ENCODE measurements at regions of chr16 and their contacts with region 1.

Region 1: GRCh38 chr16:84504420-84505248 is at the start of gene MEAK7:
- DNase-seq: peak; percentile 95 to 98 (median 97)
- ATAC-seq: peak; percentile 94
- H3K4me3 ChIP-seq: peak within 1 kb of the TSS; percentile 74 to 83
- H3K4me3 Mint-ChIP-seq: peak within 1 kb of the TSS; percentile 90
- H3K27ac ChIP-seq: peak within 1 kb of the TSS; percentile 43
- H3K27ac Mint-ChIP-seq: peak within 1 kb of the TSS; percentile 84
- H3K4me1 ChIP-seq: peaks cover 56% of the 10 kb centered on the region
- H3K4me1 Mint-ChIP-seq: peaks cover 57% of the 10 kb centered on the region
- H3K27me3 ChIP-seq: peaks cover 0 to 2% of the 10 kb centered on the region in 2 experiments
- H3K27me3 Mint-ChIP-seq: no peaks in the 10 kb centered on the region
- CTCF ChIP-seq: no peak
- total RNA-seq, gene MEAK7: 2.1 to 2.2 TPM

Region 2: GRCh38 chr16:83807710-83808572 is 696.7 kb before region 1 on chr16 and contains the start of gene HSBP1:
- CTCF ChIA-PET with region 1: no interaction called
- POLR2A ChIA-PET with region 1: no interaction called
- intact Hi-C with region 1: loop called in 1 of 2 experiments (anchors 10 kb)
- DNase-seq: peak; percentile 83 to 95 (median 92)
- ATAC-seq: peak; percentile 98
- H3K4me3 ChIP-seq: peak within 1 kb of the TSS; percentile 82 to 91
- H3K4me3 Mint-ChIP-seq: peak within 1 kb of the TSS; percentile 98
- H3K27ac ChIP-seq: peak within 1 kb of the TSS; percentile 70 to 85
- H3K27ac Mint-ChIP-seq: peak within 1 kb of the TSS; percentile 96
- H3K4me1 ChIP-seq: peaks cover 10% of the 10 kb centered on the region
- H3K4me1 Mint-ChIP-seq: peaks cover 36% of the 10 kb centered on the region
- H3K27me3 ChIP-seq: no peaks in the 10 kb centered on the region
- H3K27me3 Mint-ChIP-seq: no peaks in the 10 kb centered on the region
- CTCF ChIP-seq: no peak
- total RNA-seq, gene HSBP1: 17.5 to 24.1 TPM

Region 3: DNA sequence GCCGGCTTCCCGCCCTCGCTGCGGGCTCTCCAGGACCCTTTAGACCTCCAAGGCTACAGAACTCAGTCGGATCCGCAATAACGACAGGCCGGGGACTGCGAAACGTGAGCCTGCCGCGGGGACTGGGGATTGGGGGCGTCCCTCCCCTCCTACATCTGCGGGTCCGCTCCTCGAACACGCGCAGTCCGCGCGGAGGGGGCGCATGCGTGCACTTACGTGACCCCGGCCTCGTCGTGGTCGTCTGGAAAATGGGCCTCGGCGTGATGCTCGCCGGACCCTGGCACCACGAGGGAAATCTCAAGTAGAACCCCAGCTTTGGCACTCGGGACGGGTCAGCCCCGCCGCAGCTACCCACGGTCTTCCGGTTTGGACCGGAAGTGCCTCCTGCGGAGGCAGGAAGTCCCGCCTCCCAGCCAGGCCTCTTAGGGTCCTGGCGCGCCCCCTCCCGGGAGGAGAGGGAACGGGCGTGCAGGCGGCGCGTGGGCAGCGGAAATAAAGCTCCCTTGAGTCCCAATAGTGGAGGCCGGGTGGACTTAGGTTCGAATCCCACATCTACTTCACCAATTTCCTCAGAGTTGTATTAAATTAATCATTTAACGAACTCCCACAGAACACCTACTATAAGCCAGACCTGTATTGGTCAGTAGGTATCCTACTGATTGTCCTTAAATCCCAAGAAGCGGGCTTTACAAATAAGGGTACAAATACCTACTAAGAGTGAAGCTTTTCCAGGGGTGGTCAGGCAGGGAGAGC is 317.8 kb before region 1 on chr16 and contains the start of gene TAF1C:
- CTCF ChIA-PET with region 1: interaction called, 3 read pairs
- POLR2A ChIA-PET with region 1: no interaction called
- intact Hi-C with region 1: loop called in 1 of 2 experiments (anchors 10 kb)
- DNase-seq: peak; percentile 75 to 95 (median 88)
- ATAC-seq: peak; percentile 97
- H3K4me3 ChIP-seq: peak within 1 kb of the TSS; percentile 87 to 100
- H3K4me3 Mint-ChIP-seq: peak within 1 kb of the TSS; percentile 91
- H3K27ac ChIP-seq: peak within 1 kb of the TSS; percentile 71 to 77
- H3K27ac Mint-ChIP-seq: peak within 1 kb of the TSS; percentile 94
- H3K4me1 ChIP-seq: peaks cover 6% of the 10 kb centered on the region
- H3K4me1 Mint-ChIP-seq: peaks cover 20% of the 10 kb centered on the region
- H3K27me3 ChIP-seq: no peaks in the 10 kb centered on the region
- H3K27me3 Mint-ChIP-seq: no peaks in the 10 kb centered on the region
- CTCF ChIP-seq: peak; percentile 89
- total RNA-seq, gene TAF1C: 86.0 to 92.6 TPM

Region 4: DNA sequence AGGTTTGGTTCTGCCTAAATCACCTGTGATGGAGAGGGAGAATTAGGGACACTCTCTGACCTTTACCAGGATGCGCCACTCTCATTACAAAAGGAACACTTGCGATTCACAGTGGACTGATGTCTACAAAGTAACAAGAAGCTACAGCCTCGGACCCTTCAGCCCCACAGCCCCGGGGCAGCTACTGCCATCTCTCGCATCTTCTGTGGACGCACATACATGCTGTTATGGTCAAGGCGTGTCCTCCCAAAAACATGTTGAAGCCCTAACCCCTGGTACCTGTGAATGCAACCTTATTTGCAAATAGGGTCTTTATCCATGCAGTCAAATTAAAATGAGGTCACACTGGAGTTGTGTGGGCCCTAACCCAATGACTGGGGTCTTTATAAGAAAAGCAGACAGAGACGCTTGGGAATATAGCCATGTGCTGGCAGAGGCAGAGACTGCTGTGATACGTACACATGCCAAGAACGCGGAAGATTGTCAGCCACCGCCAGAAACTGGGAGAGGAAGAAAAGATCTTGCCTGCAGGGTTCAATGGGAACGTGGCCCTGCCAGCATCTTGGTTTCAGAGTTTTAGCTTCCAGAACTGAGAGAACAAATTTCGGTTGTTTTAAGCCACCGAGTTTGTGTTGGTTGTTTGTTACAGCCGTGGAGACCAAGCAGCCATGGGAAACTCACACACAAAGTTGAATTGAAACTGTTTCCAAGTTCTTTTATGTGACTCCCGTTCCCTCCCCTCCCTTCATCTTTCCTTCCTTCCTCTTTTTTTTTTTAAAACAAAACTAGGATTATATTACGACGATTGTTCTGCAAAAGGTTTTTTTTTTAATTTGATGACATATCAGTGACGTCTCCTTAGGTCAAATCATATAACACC is 113.2 kb before region 1 on chr16:
- CTCF ChIA-PET with region 1: no interaction called
- POLR2A ChIA-PET with region 1: no interaction called
- intact Hi-C with region 1: no loop called
- DNase-seq: no peak
- ATAC-seq: no peak
- H3K4me3 ChIP-seq: no peak overlapping the region
- H3K4me3 Mint-ChIP-seq: no peak overlapping the region
- H3K27ac ChIP-seq: no peak overlapping the region
- H3K27ac Mint-ChIP-seq: no peak overlapping the region
- H3K4me1 ChIP-seq: no peaks in the 10 kb centered on the region
- H3K4me1 Mint-ChIP-seq: no peaks in the 10 kb centered on the region
- H3K27me3 ChIP-seq: peaks cover 0 to under 1% of the 10 kb centered on the region in 2 experiments
- H3K27me3 Mint-ChIP-seq: peaks cover 19% of the 10 kb centered on the region
- CTCF ChIP-seq: no peak

Region 5: DNA sequence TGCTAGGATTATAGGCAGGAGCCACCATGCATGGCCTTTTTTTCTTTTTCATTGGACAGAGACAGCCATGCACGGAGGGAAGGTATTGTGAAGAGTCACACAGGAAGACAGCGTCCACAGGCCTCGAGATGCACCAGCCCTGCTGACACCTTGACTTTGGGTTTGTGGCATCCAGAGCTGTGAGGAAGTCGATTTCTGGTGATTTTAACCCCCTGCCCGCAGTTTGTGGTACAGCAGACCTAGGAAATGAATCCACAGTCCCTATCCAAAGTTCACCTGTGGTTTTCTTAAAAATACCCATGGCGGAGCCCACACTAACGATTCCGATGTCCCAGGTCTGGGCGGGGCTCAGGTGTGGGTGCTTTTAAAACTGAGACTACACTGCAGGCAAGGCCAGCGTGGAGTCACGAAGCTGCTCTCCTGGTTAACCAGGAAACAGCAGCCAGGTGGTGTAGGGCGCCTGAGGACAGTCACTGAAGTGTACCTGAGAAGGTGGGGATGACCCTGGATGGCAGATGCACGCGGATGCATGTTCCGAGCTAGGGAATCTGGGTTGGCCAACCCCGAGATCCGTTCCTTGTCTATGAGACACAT is 14.2 kb after region 1 on chr16:
- CTCF ChIA-PET with region 1: interaction called, 32 read pairs
- POLR2A ChIA-PET with region 1: interaction called, 20 read pairs
- intact Hi-C with region 1: loop called in 1 of 2 experiments (anchors 1 kb)
- DNase-seq: peak; percentile 29 to 90 (median 66)
- ATAC-seq: peak; percentile 54
- H3K4me3 ChIP-seq: no peak overlapping the region
- H3K4me3 Mint-ChIP-seq: peak overlapping the region; percentile 45
- H3K27ac ChIP-seq: peak overlapping the region in 1 of 2 experiments; percentile 21
- H3K27ac Mint-ChIP-seq: peak overlapping the region; percentile 84
- H3K4me1 ChIP-seq: peaks cover 61% of the 10 kb centered on the region
- H3K4me1 Mint-ChIP-seq: peaks cover 61% of the 10 kb centered on the region
- H3K27me3 ChIP-seq: no peaks in the 10 kb centered on the region
- H3K27me3 Mint-ChIP-seq: no peaks in the 10 kb centered on the region
- CTCF ChIP-seq: no peak

Region 6: GRCh38 chr16:84541999-84542817 is 37.6 kb after region 1 on chr16:
- CTCF ChIA-PET with region 1: no interaction called
- POLR2A ChIA-PET with region 1: no interaction called
- intact Hi-C with region 1: no loop called
- DNase-seq: no peak
- ATAC-seq: no peak
- H3K4me3 ChIP-seq: no peak overlapping the region
- H3K4me3 Mint-ChIP-seq: no peak overlapping the region
- H3K27ac ChIP-seq: no peak overlapping the region
- H3K27ac Mint-ChIP-seq: no peak overlapping the region
- H3K4me1 ChIP-seq: peaks cover 14% of the 10 kb centered on the region
- H3K4me1 Mint-ChIP-seq: peaks cover 25% of the 10 kb centered on the region
- H3K27me3 ChIP-seq: no peaks in the 10 kb centered on the region
- H3K27me3 Mint-ChIP-seq: no peaks in the 10 kb centered on the region
- CTCF ChIP-seq: no peak

Region 7: GRCh38 chr16:84726079-84726668 is 221.5 kb after region 1 on chr16:
- CTCF ChIA-PET with region 1: interaction called, 50 read pairs
- POLR2A ChIA-PET with region 1: no interaction called
- intact Hi-C with region 1: no loop called
- DNase-seq: peak; percentile 74 to 92 (median 83)
- ATAC-seq: peak; percentile 76
- H3K4me3 ChIP-seq: no peak overlapping the region
- H3K4me3 Mint-ChIP-seq: peak overlapping the region; percentile 50
- H3K27ac ChIP-seq: no peak overlapping the region
- H3K27ac Mint-ChIP-seq: no peak overlapping the region
- H3K4me1 ChIP-seq: peaks cover 34% of the 10 kb centered on the region
- H3K4me1 Mint-ChIP-seq: peaks cover 64% of the 10 kb centered on the region
- H3K27me3 ChIP-seq: no peaks in the 10 kb centered on the region
- H3K27me3 Mint-ChIP-seq: no peaks in the 10 kb centered on the region
- CTCF ChIP-seq: peak; percentile 98

Region 8: DNA sequence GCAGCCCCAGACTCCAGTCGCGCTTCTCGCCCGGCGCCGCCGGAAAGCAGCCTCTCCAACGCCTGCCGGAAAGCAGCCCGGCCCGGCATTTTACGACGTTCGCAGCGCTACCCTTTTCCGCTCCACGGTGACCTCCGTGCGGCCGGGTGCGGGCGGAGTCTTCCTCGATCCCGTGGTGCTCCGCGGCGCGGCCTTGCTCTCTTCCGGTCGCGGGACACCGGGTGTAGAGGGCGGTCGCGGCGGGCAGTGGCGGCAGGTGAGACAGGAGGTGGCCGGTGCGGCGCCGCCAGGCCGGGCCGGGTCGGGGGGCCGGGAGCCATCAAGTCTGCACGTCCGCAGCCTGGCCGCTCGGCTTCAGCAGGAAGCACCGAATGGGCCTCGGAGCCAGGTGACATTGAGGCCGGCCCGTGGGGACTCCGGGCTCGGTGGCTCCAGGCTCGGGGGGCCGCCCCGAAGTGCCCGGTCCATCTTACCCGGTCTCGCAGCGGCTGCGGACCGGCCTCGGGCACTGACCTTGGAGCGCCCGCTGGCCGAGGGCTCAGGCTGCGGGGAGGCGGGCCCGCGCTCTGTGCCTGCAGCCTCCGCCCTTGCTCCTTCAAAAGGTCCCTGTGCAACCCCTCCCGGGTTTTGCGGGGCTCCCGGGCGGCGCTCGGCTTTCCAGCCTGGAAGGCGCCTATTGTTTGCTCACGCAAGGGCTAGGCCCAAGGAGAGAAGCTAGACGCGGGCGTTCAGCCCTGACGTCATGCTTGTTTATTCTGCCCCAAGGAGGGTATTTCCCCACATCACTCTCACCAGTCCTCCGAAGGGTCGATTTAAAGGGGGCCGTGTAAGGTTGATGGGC is 1295.1 kb after region 1 on chr16 and contains the starts of genes COX4I1 and EMC8:
- CTCF ChIA-PET with region 1: no interaction called
- POLR2A ChIA-PET with region 1: no interaction called
- intact Hi-C with region 1: loop called in 1 of 2 experiments (anchors 10 kb)
- DNase-seq: peak; percentile 84 to 96 (median 93)
- ATAC-seq: peak; percentile 76
- H3K4me3 ChIP-seq: peak within 1 kb of the TSS; percentile 83 to 87
- H3K4me3 Mint-ChIP-seq: peak within 1 kb of the TSS; percentile 89
- H3K27ac ChIP-seq: peak within 1 kb of the TSS; percentile 77 to 92
- H3K27ac Mint-ChIP-seq: peak within 1 kb of the TSS; percentile 97
- H3K4me1 ChIP-seq: peaks cover 33% of the 10 kb centered on the region
- H3K4me1 Mint-ChIP-seq: peaks cover 69% of the 10 kb centered on the region
- H3K27me3 ChIP-seq: no peaks in the 10 kb centered on the region
- H3K27me3 Mint-ChIP-seq: no peaks in the 10 kb centered on the region
- CTCF ChIP-seq: no peak
- total RNA-seq, gene COX4I1: 876 to 878 TPM
- total RNA-seq, gene EMC8: 56.0 to 56.2 TPM